Ascending aorta (tissue), 2 donors: ENCODE measurements at regions of chr1 and their contacts with region 1.

Region 1: GRCh38 chr1:201481761-201482493 is 12.9 kb upstream of the PHLDA3 start:
- DNase-seq: peak; percentile 46 to 89
- H3K4me3 ChIP-seq: peak overlapping the region; percentile 23 to 63
- H3K27ac ChIP-seq: peak overlapping the region; percentile 66 to 72
- H3K4me1 ChIP-seq: peaks cover 9 to 28% of the 10 kb centered on the region in 2 donors
- H3K27me3 ChIP-seq: no peaks in the 10 kb centered on the region
- CTCF ChIP-seq: peak; percentile 79 to 94 (median 90)

Region 2: DNA sequence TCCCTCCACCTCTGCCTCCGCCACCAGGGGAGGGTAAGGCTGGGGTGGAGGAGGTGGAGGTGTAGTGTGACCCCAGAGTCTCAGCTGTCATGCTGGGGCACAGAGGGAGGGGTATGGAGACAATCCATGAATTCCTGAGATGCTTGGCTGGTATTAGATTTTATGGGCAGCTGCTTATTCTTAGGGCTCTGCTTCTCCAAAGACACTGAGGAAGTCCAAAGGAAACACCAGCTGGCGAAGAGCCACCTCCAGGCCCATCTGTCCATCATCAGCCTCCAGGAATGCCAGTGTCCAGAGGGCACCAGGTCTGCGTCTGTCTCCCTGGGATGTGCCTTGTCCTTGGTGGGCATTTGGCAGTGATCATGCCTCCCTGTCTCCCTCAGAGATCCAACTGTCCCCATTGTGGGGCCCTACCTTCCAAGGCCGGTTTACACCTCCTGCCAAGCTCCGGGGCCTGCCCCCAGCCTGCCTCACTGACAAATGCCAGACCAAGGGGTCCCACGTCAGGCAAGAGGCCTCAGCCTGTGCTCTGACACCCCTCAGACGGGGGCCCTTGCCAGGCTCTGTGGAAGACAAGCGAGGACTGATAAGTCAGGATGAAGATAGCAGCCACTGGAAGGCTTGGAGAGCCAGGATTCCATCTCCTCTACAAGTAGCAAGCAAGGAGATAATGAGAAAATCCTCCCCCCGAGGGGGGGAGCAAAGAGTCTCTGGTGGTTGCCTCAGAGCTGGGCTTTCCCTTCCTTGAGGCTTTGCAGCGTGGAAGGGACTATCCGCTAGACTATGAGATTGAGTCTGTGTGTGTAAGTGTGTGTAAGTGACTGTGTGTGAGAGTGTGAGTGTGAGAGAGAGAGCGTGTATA is 62.0 kb before region 1 on chr1:
- intact Hi-C with region 1: no loop called
- DNase-seq: no peak
- H3K4me3 ChIP-seq: no peak overlapping the region
- H3K27ac ChIP-seq: no peak overlapping the region
- H3K4me1 ChIP-seq: no peaks in the 10 kb centered on the region
- H3K27me3 ChIP-seq: no peaks in the 10 kb centered on the region
- CTCF ChIP-seq: no peak

Region 3: GRCh38 chr1:201436393-201436792 is 45.5 kb before region 1 on chr1:
- intact Hi-C with region 1: loop called (anchors 2 kb)
- DNase-seq: no peak
- H3K4me3 ChIP-seq: no peak overlapping the region
- H3K27ac ChIP-seq: no peak overlapping the region
- H3K4me1 ChIP-seq: peaks cover 0 to 4% of the 10 kb centered on the region in 2 donors
- H3K27me3 ChIP-seq: no peaks in the 10 kb centered on the region
- CTCF ChIP-seq: no peak

Region 4: DNA sequence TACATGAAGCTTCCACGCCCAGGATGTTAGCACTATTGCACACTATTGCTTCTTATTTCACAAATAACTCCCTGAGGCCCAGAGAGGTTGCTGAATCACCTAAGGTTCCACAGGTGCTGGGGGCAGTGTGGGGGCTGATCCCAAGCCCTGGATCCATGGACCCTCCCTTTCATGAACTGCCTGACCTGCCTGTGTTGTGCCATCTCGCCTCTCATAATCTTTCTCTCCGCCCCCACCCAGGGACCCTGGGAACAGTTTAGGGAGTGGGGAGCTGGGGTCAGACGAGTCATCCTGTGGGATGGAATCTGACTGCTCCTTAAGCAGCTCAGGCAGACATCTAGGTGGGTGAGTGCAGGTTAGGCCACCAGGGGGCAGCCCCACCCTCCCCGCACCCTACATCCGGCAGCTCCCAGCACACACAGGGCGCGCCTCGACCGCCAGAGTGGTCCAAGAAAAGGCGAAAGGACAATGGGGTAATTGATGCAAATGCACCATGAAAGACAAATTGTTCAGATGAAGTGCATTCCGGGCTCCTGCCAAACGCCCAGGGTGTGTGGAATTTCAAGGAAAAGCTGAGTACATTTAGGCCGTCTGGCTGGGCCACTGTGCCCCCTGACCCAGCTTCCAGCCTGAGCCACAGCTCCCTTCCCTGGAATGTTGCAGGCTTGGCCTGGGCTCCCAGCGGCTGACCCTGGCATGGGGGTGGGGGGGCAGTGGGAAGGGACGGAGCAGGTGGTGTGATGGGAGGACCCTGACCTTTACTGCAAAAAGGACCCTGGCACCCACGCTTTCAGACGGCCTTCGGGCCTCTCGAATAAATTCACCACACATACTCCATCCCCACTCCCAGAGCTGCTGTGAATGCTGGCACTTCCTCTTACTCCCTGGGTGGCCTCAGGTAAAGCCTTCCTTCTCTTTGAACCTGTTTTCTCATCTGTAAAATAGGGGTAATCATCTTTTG is 33.7 kb before region 1 on chr1:
- intact Hi-C with region 1: loop called (anchors 1 kb)
- DNase-seq: peak in 1 of 2 donors; percentile 86
- H3K4me3 ChIP-seq: no peak overlapping the region
- H3K27ac ChIP-seq: peak overlapping the region in 1 of 2 donors; percentile 28
- H3K4me1 ChIP-seq: peaks cover 6 to 10% of the 10 kb centered on the region in 2 donors
- H3K27me3 ChIP-seq: no peaks in the 10 kb centered on the region
- CTCF ChIP-seq: peak; percentile 78 to 89 (median 81)

Region 5: DNA sequence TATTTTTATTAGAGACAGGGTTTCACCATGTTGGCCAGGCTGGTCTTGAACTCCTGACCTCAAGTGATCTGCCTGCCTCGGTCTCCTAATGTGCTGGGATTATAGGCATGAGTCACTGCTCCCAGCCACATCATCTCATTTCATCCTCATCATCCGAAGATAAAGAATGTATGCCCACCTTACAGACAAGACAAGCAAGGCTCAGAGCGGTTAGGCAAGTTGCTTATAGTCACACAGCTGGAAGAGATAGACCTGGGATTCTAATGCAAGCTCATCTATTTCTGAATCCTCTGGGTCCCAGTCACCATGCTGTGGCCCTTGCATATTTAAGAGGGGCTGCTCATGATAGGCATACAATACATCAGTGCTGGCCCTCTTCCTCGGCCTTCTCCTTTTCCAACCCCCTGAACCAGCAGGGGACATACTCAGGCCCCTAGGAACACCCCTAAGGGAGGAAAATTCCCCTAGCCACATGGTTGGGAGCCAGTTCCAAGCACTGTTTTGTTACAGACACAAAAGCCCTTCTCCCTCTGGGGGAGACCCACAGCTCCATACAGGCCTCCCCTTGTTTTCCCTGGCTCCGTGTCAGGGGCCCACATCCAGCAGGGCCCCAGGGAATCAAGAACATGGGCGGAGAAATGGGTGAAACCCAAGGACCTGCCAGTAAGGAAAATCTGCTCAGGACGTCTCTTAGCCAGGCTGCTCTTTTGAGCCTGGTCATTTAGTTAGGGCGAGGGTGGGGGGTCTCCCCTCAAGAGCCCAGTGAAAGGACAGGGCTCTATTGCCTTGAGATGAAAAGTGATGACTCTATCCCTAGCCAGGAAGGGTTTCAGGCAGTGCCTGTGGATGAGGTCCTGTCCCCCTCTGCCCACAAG is 18.1 kb after region 1 on chr1:
- intact Hi-C with region 1: loop called (anchors 2 kb)
- DNase-seq: peak in 1 of 2 donors; percentile 77
- H3K4me3 ChIP-seq: peak overlapping the region; percentile 35 to 71
- H3K27ac ChIP-seq: peak overlapping the region; percentile 93 to 99
- H3K4me1 ChIP-seq: peaks cover 54 to 83% of the 10 kb centered on the region in 2 donors
- H3K27me3 ChIP-seq: no peaks in the 10 kb centered on the region
- CTCF ChIP-seq: no peak

Region 6: GRCh38 chr1:201511941-201512539 is 30.1 kb after region 1 on chr1:
- intact Hi-C with region 1: loop called (anchors 1 kb)
- DNase-seq: peak in 1 of 2 donors; percentile 85
- H3K4me3 ChIP-seq: peak overlapping the region in 1 of 2 donors; percentile 3
- H3K27ac ChIP-seq: peak overlapping the region; percentile 62 to 87
- H3K4me1 ChIP-seq: peaks cover 9 to 27% of the 10 kb centered on the region in 2 donors
- H3K27me3 ChIP-seq: no peaks in the 10 kb centered on the region
- CTCF ChIP-seq: no peak

Region 7: DNA sequence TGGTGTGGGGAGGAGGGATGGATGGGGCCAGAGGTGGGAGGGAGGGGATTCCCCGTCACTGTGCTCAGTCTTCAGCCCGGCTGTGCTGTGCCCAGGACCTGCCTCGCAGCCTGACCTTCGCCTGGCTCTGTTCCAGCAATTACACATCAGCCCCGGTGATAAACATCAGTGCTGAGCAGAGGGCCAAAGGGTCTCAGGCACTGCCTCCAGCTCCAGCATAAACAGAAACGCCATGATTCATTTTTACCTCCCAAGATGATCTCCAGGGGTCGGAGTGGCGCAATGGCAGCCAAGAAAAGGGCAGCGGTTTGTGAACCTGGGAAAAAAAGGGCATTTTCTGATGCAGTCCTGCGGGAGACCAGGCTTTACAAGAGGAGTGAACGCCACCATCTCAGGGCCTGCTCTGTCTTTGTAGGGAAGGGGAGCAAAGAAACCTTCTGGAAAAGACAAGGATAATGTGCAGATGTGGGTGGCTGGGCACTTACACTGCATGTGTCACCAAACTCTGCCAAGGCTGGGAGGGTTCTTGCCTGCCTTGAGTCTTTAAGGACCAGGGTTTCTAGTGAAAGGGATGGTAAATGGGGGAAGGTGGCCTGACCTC is 434.8 kb after region 1 on chr1:
- intact Hi-C with region 1: no loop called
- DNase-seq: peak; percentile 69 to 97
- H3K4me3 ChIP-seq: peak overlapping the region; percentile 30 to 50
- H3K27ac ChIP-seq: peak overlapping the region; percentile 94 to 97
- H3K4me1 ChIP-seq: peaks cover 71 to 94% of the 10 kb centered on the region in 2 donors
- H3K27me3 ChIP-seq: no peaks in the 10 kb centered on the region
- CTCF ChIP-seq: no peak